Sigmoid colon (tissue), 7 donors: ENCODE measurements at regions of chr15 and their contacts with region 1.

Region 1: DNA sequence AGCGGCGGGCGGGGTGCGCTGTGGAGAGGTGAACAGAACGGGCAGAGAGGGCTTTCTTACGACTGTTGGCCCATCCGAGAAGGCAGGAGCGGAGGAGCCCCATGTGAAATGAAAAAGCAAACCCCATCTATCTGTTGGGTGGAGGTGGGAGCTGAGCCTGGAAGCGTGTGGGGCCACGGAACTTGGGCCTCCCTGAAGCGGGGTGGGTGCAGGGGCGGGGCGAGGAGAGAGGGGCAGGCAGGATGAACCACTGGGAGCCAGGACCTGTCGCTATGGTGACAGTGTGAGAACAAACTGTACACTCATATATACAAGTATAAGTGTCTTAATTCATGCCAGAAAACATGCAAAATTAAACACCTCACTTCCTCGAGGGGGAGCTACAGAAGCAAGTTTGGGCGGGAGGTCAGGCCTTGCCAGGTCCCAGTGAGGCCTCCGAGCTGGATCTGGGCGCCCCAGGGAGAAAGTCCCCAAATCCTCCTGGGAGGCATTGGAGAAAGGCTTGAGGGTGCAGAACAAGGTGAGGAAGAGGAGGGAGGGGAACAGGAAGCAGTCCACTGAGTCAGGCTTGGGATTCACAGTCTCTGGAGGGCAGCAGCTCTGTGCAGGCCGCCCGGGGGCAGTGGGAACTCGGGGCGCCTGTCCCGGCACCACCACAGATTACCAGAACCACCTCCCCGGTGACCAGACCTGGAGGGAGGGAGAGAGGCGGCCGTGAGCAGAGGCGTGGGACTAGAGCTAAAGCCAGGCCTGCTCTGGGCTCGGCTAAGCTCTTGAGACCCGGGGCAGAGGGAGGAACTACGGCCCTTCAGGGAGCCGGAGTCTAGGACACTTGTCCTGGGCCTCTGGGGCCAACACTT is 34.8 kb downstream of the RBPMS2 start:
- DNase-seq: peak; percentile 98
- H3K4me3 ChIP-seq: peak overlapping the region in 3 of 4 donors; percentile 27 to 39 (median 33)
- H3K27ac ChIP-seq: peak overlapping the region; percentile 88 to 93 (median 90)
- H3K4me1 ChIP-seq: peaks cover 0 to 84% (median 70%) of the 10 kb centered on the region in 4 donors
- H3K27me3 ChIP-seq: no peaks in the 10 kb centered on the region
- CTCF ChIP-seq: peak in 2 of 4 experiments; percentile 26 to 32
- EP300 ChIP-seq: peak in 3 of 4 donors; percentile 49 to 92 (median 75)
- POLR2A ChIP-seq: no peak

Region 2: GRCh38 chr15:64775551-64776401 is 35.2 kb after region 1 on chr15 and contains the start of gene RBPMS2:
- intact Hi-C with region 1: loop called (anchors 5 kb)
- DNase-seq: peak; percentile 74
- H3K4me3 ChIP-seq: peak within 1 kb of the TSS; percentile 66 to 96 (median 90)
- H3K27ac ChIP-seq: peak within 1 kb of the TSS; percentile 95 to 99 (median 96)
- H3K4me1 ChIP-seq: peaks cover 0 to 49% (median 38%) of the 10 kb centered on the region in 4 donors
- H3K27me3 ChIP-seq: no peaks in the 10 kb centered on the region
- CTCF ChIP-seq: no peak
- EP300 ChIP-seq: no peak
- POLR2A ChIP-seq: peak in 1 of 2 donors; percentile 29
- total RNA-seq, gene RBPMS2: 22.1 to 58.2 (median 23.6) TPM

Region 3: DNA sequence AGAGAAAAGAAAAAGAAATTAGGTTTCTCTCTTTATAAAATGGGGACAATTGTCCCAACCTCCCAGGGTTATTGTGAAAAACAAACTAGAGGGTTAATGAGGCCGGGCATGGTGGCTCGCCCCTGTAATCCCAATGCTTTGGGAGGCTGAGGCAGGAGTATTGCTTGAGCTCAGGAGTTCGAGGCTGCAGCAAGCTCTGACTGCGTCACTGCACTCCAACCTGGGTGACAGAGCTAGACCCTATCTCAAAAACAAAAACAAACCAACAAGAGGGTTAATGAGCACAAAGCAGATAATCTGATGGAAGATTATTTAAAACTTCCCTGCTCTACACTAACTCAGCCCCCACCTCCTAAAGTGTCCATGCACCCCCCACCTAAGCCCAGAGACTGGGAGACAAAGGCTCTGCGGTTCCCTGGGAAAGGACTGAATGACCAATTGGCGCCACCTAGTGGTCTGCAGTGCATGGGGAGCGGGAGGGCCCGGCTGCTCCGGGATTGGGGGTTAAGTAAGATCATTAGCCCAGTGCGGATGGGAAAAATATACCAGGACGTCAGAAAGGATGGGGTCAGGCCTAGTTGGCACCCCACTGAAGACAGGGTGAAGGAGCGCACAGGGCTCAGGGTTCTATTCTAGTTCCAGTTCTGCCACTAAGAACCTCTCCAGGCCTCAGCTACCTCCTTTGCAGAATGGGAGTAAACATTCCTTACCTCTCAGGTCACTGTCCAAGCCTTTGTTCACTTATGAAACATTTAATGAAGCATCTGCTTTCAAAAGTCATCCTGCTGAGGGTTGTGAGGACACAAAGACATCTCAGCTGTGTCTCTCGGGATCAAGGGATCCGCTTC is 69.3 kb after region 1 on chr15:
- intact Hi-C with region 1: loop called (anchors 1 kb)
- DNase-seq: peak; percentile 93
- H3K4me3 ChIP-seq: no peak overlapping the region
- H3K27ac ChIP-seq: peak overlapping the region; percentile 89 to 91 (median 90)
- H3K4me1 ChIP-seq: peaks cover 0 to 48% (median 43%) of the 10 kb centered on the region in 4 donors
- H3K27me3 ChIP-seq: no peaks in the 10 kb centered on the region
- CTCF ChIP-seq: peak; percentile 91 to 98 (median 94)
- EP300 ChIP-seq: no peak
- POLR2A ChIP-seq: no peak